ENCODE measurements at regions of chr3 and their contacts with region 1.

Region 1: DNA sequence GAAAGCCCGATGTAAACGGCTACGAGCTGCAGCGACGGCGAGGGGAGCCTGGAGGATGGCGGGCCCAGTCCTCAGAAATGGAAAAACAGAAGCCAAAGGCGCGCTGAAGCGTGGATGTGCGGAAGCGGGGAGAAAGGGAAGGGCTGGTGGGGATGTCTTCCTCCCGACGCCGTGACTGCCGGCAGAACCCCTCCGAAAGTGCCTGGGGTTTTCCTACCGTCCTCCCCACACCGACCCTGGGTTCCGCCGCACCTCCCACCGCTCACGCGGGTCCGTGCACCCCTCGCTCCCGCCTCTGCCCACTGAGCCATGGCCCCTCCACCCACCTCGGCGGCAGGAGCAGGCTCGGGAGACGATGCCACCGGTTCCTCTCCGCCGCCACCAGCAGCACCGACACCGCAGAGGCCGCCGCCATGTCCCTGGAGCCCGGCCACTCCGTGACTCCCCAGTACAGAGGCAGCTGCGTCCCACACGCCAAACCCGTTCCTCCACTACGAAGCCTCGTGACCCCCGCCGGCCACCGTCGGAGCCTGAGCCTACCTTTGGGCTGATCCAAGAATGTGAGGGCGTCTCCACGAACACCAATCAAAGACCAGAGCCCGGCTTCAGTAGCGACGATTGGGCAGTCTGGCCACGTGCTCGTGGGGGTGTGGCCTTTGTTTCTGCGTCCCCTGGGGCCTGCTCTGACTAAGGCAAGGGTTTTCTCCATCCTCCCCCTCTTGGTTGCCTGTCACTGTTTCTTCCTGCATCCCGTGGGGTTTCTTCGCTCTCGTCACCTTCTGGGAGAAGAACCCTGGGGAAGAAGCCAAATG is at the start of gene MCCC1:
- DNase-seq: peak; percentile 96 to 99
- H3K4me3 ChIP-seq: peak within 1 kb of the TSS; percentile 65 to 83
- H3K27ac ChIP-seq: peak within 1 kb of the TSS; percentile 90 to 91
- H3K4me1 ChIP-seq: peaks cover 0 to 15% of the 10 kb centered on the region in 2 donors
- H3K27me3 ChIP-seq: no peaks in the 10 kb centered on the region
- CTCF ChIP-seq: no peak
- total RNA-seq, gene MCCC1: 10.3 TPM

Region 2: GRCh38 chr3:182980204-182981037 is 118.8 kb before region 1 on chr3 and contains the start of gene DCUN1D1:
- intact Hi-C with region 1: loop called (anchors 1 kb)
- DNase-seq: peak; percentile 56 to 95
- H3K4me3 ChIP-seq: peak within 1 kb of the TSS; percentile 96 to 100
- H3K27ac ChIP-seq: peak within 1 kb of the TSS; percentile 84 to 89
- H3K4me1 ChIP-seq: peaks cover 3 to 11% of the 10 kb centered on the region in 2 donors
- H3K27me3 ChIP-seq: no peaks in the 10 kb centered on the region
- CTCF ChIP-seq: no peak
- total RNA-seq, gene DCUN1D1: 8.4 TPM

Region 3: DNA sequence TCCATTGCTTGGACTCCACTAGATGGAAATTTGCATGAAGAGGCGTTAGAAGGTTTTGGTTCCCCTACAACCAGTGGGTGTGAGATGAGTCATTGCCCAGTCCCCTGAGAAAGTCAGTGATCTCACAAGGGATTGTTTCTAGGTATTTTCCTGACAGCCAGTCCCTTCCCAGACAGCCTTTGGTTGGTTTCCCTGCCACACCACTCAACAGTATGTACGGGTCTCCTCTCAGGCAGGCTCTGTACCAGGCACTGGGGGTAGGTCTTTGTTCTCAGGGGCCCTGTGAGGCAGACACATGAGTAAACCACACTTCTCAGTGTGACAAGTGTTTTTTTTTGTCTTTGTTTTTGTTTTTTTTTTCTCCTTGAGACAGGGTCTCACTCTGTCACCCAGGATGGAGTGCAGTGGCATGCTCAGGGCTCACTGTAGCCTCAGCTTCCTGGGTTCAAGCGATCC is 59.3 kb after region 1 on chr3:
- intact Hi-C with region 1: no loop called
- DNase-seq: no peak
- H3K4me3 ChIP-seq: no peak overlapping the region
- H3K27ac ChIP-seq: no peak overlapping the region
- H3K4me1 ChIP-seq: peaks cover 0 to 8% of the 10 kb centered on the region in 2 donors
- H3K27me3 ChIP-seq: no peaks in the 10 kb centered on the region
- CTCF ChIP-seq: no peak

Region 4: GRCh38 chr3:183447206-183448001 is 348.2 kb after region 1 on chr3:
- intact Hi-C with region 1: loop called (anchors 2 kb)
- DNase-seq: peak; percentile 21 to 87
- H3K4me3 ChIP-seq: peak overlapping the region; percentile 64 to 95
- H3K27ac ChIP-seq: peak overlapping the region; percentile 30 to 71
- H3K4me1 ChIP-seq: peaks cover 3 to 4% of the 10 kb centered on the region in 2 donors
- H3K27me3 ChIP-seq: no peaks in the 10 kb centered on the region
- CTCF ChIP-seq: no peak

Region 5: GRCh38 chr3:183697610-183698317 is 598.5 kb after region 1 on chr3 and contains the start of gene YEATS2:
- intact Hi-C with region 1: loop called (anchors 5 kb)
- DNase-seq: peak in 1 of 2 donors; percentile 78
- H3K4me3 ChIP-seq: peak within 1 kb of the TSS; percentile 71 to 88
- H3K27ac ChIP-seq: peak within 1 kb of the TSS; percentile 86 to 89
- H3K4me1 ChIP-seq: peaks cover 0 to 15% of the 10 kb centered on the region in 2 donors
- H3K27me3 ChIP-seq: no peaks in the 10 kb centered on the region
- CTCF ChIP-seq: no peak
- total RNA-seq, gene YEATS2: 29.2 TPM

Measured in ascending aorta (tissue), 2 donors.